Gastrocnemius medialis (tissue), 4 donors: ENCODE measurements at regions of chr16 and their contacts with region 1.

Region 1: DNA sequence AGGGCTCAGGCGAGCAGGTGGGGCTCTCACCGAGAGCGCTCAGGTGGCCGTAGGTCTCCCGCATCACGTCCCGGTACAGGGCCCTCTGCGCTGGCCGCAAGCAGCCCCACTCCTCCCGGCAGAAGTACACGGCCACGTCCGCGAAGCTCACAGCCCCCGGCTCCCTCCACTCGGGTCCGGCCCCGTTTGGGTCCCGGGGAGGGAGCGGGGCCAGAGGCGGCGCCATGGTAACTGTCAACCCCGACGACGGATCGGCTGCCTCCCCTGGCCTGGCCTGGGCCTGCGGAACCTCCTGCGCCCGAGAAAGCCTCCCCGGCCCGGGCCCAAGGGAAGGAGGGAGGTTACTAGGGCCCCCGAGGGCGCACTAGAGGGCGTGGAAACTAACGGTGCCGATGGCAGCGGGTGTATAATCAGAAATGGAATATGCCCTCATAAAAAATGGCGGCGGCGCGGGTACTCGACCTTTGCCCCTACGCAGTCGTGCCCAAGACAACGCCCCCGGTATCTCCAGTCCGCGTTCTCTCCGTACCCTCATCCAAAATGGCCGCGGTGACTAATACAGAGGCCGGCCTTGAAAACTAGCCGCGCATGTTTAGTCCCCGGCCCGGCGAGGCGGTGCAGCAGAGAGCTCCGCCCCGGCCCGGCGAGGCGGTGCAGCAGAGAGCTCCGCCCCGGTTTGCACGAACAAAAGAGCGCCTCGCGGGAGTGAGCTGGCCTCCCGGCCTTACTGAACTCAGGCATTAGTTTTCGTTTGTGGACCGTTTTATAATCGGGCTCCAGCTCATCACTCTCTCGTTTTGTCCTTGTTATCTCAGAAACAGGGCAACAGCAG is at the start of gene ZNF764:
- DNase-seq: peak; percentile 99
- ATAC-seq: peak; percentile 94 to 98
- H3K4me3 ChIP-seq: peak within 1 kb of the TSS; percentile 88 to 99 (median 98)
- H3K27ac ChIP-seq: peak within 1 kb of the TSS; percentile 95 to 99 (median 98)
- H3K4me1 ChIP-seq: peaks cover 22 to 28% of the 10 kb centered on the region in 2 donors
- H3K27me3 ChIP-seq: no peaks in the 10 kb centered on the region
- CTCF ChIP-seq: no peak
- POLR2A ChIP-seq: peak; percentile 49
- total RNA-seq, gene ZNF764: 3.7 to 5.5 (median 4.9) TPM

Region 2: DNA sequence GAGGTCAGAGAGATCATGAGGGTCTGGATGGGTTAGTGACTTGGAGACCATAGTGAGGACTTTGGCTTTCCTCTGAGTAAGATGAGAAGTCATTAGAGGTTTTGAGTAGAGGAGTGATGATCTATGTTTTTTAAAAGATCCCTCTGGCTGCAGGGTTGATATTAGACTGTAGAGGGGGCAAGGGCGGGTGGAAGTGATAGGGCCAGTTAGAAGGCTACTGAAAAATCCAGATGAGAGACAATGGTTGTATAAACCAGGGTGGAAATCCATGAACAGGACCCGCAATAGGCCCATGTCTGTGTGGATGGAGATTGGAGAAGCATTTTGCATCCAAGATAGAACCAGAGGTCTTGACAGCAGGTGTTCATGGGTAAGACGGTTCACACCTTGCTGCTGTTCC is 75.8 kb before region 1 on chr16:
- in situ Hi-C with region 1: no loop called
- intact Hi-C with region 1: loop called (anchors 10 kb)
- DNase-seq: no peak
- ATAC-seq: no peak
- H3K4me3 ChIP-seq: no peak overlapping the region
- H3K27ac ChIP-seq: no peak overlapping the region
- H3K4me1 ChIP-seq: peaks cover 3 to 7% of the 10 kb centered on the region in 2 donors
- H3K27me3 ChIP-seq: no peaks in the 10 kb centered on the region
- CTCF ChIP-seq: no peak
- POLR2A ChIP-seq: no peak

Region 3: DNA sequence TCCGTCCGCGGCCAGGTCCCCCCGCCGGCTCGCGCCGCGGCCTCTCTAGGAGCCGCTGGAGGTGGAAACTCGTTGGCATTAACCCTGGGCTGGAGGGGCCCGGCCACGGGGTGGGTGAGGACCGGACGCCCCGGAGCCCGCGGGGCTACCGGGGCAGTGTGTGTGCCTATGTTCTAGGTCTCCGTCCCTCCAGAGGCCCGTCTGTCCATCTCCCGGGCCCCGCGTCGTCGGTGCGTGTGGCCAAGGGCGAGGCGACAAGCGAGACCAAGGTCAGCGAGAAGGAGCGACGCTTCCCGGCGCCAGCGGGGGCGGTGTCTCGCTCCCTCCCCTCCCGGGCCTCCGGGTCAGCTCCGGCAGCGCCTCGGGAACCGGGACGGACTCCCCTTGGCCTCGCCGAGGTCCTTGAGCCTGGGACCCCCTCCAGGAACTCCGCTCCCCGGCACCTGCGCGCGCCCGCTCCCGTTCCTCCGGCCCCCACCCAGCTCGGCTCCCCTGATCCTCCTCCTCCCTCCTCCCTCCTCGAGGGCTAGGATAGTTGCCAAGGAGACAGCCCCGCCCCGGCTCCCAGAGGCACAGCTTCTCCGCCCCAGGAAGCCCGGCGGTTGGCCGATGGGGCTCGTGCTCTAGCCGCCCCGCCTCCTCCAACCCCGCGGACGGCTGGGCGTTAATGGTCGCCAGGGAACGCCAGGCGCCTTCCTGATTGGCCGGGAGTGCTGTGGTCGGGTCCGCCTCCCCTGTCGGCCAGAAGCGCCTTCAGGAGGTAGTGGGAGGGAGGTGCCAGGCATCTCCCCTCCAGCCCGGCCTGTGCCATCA is 31.1 kb before region 1 on chr16:
- in situ Hi-C with region 1: no loop called
- intact Hi-C with region 1: loop called (anchors 2 kb)
- DNase-seq: peak; percentile 98
- ATAC-seq: peak; percentile 87 to 91
- H3K4me3 ChIP-seq: peak overlapping the region; percentile 66 to 91 (median 86)
- H3K27ac ChIP-seq: peak overlapping the region; percentile 96 to 100 (median 97)
- H3K4me1 ChIP-seq: peaks cover 19 to 36% of the 10 kb centered on the region in 2 donors
- H3K27me3 ChIP-seq: no peaks in the 10 kb centered on the region
- CTCF ChIP-seq: peak in 4 of 5 experiments; percentile 45 to 62 (median 52)
- POLR2A ChIP-seq: peak; percentile 80 to 88

Region 4: DNA sequence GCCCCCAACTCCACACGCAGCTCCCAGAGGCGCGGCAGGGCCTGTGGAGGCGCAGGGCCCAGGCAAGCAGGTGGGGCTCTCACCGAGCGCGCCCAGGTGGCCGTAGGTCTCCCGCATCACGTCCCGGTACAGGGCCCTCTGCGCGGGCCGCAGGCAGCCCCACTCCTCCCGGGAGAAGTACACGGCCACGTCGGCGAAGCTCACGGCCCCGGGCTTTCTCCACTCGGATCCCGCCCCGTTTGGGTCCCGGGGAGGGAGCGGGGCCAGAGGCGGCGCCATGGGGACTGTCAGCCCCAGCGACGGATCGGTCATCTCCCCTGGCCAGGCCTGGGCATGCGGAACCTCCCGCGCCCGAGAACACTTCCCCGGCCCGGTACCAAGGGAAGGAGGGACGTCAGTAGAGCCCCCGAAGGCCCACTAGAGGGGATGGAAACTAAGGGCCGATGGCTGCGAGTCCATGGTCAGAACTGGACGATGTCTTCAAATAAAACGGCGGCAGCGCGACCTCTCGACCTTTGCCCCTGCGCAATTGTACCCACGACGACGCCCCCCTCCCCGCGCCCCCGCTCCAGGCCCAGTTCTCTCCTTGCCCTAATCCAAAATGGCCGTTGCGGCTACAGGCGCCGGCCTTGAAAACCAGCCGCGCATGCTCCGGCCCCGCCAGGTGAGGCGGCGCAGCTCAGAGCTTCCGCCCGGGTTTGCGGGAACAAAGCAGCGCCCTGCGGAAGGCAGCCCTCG is 23.6 kb before region 1 on chr16 and contains the start of gene ZNF747:
- in situ Hi-C with region 1: no loop called
- intact Hi-C with region 1: loop called (anchors 1 kb)
- DNase-seq: peak; percentile 93 to 95
- ATAC-seq: peak; percentile 87 to 91
- H3K4me3 ChIP-seq: peak within 1 kb of the TSS; percentile 65 to 88 (median 82)
- H3K27ac ChIP-seq: peak within 1 kb of the TSS; percentile 90 to 96 (median 94)
- H3K4me1 ChIP-seq: peaks cover 23 to 24% of the 10 kb centered on the region in 2 donors
- H3K27me3 ChIP-seq: no peaks in the 10 kb centered on the region
- CTCF ChIP-seq: peak in 1 of 5 experiments; percentile 6
- POLR2A ChIP-seq: peak; percentile 71 to 74
- total RNA-seq, gene ZNF747: 8.6 to 17.5 (median 13.1) TPM

Region 5: GRCh38 chr16:30571695-30572600 is 13.8 kb after region 1 on chr16 and contains the start of gene ZNF688:
- in situ Hi-C with region 1: no loop called
- intact Hi-C with region 1: loop called (anchors 1 kb)
- DNase-seq: peak; percentile 95 to 96
- ATAC-seq: peak; percentile 96
- H3K4me3 ChIP-seq: peak within 1 kb of the TSS; percentile 75 to 96 (median 86)
- H3K27ac ChIP-seq: peak within 1 kb of the TSS; percentile 84 to 99 (median 98)
- H3K4me1 ChIP-seq: peaks cover 21 to 24% of the 10 kb centered on the region in 2 donors
- H3K27me3 ChIP-seq: no peaks in the 10 kb centered on the region
- CTCF ChIP-seq: no peak
- POLR2A ChIP-seq: peak in 1 of 2 donors; percentile 68
- total RNA-seq, gene ZNF688: 11.0 to 38.2 (median 18.5) TPM

Region 6: DNA sequence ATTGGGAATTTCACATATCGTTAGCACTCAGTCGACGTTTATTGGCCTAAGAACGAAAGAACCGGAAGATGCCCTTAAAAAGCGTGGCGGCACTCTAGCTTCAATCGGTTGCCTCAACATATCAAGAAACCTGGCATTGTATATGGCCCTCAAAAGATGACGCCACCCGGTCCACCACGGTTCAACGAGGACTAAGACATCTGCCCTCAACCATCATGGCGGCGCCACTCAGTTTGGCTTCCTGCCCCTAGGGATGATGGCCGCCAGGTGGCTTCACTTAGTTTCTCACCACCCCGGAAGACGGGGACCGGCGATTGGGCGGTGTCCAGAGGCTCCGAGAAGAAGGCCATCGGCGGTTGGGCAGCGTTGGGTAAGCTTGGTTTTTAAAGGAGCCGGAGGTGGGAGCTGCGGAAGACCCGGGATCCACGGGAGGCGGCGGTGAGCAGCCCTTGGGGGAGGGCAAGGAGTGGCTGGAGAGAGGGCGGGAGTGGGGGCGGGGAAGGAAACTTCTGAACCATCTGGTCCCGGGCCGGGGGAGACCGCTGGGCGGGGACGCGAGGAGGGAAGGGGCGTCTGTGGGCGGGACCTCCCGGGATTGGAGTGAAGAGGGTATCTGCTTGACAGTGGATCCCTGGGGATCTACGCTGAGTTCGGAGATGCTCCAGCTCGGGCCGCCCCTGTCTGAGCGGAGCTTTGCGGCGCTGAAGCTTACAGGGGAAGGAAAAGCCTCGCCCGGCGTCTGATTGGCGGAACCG is 92.4 kb after region 1 on chr16 and contains the start of gene PRR14:
- in situ Hi-C with region 1: no loop called
- intact Hi-C with region 1: loop called (anchors 1 kb)
- DNase-seq: peak; percentile 100
- ATAC-seq: peak; percentile 90 to 91
- H3K4me3 ChIP-seq: peak within 1 kb of the TSS; percentile 83 to 96 (median 93)
- H3K27ac ChIP-seq: peak within 1 kb of the TSS; percentile 94 to 99 (median 98)
- H3K4me1 ChIP-seq: peaks cover 6 to 18% of the 10 kb centered on the region in 2 donors
- H3K27me3 ChIP-seq: no peaks in the 10 kb centered on the region
- CTCF ChIP-seq: peak in 4 of 5 experiments; percentile 38 to 69 (median 48)
- POLR2A ChIP-seq: peak in 1 of 2 donors; percentile 74
- total RNA-seq, gene PRR14: 8.8 to 28.4 (median 17.8) TPM